Right ventricle myocardium superior (tissue), 1 donor: ENCODE measurements at regions of chr10 and their contacts with region 1.

Region 1: GRCh38 chr10:99430451-99431189 is at the start of gene GOT1:
- DNase-seq: peak; percentile 96
- ATAC-seq: peak; percentile 92
- total RNA-seq, gene GOT1: 516 TPM

Region 2: DNA sequence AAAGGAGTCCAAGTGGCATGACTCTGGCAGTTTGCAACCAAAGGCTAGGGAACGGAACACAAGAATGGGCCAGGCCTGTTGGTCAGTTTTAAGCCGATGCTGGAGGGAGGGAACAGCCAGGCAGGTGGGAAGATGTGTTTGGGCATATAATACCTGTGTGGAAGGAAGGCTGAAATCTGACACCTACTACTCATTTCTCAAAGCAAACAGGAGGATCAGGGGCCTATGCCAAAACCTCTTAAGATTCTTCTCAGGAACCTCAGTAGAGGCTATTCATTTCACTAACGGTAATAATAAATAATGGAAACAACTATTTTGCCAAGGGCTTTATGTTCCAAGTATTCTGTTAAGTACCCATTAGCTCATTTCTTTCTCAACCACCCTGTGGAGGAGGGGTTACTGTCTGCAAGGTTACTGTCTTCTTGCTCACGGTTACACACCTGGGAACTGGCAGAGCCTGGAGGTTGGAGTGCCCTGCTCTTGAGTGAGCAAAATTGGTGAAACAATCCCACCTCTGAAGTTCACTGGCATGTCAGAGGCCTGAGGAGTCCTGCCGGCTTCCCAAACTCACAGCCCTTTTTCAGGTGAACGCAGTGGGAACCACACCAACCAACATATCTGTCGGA is 35.7 kb before region 1 on chr10:
- intact Hi-C with region 1: loop called (anchors 5 kb)
- DNase-seq: no peak
- ATAC-seq: no peak

Region 3: GRCh38 chr10:99711129-99711719 is 280.6 kb after region 1 on chr10:
- intact Hi-C with region 1: loop called (anchors 10 kb)
- DNase-seq: no peak
- ATAC-seq: peak; percentile 79